Adrenal gland (tissue), 19 donors: ENCODE measurements at regions of chr3 and their contacts with region 1.

Region 1: GRCh38 chr3:113495035-113495434 is 19.9 kb downstream of the SPICE1 start:
- DNase-seq: peak; percentile 26 to 68 (median 40)
- H3K4me3 ChIP-seq: no peak overlapping the region
- H3K27ac ChIP-seq: no peak overlapping the region
- H3K4me1 ChIP-seq: no peaks in the 10 kb centered on the region
- H3K27me3 ChIP-seq: no peaks in the 10 kb centered on the region
- CTCF ChIP-seq: peak; percentile 30 to 54 (median 50)
- POLR2A ChIP-seq: no peak

Region 2: GRCh38 chr3:113575206-113575605 is 80.2 kb after region 1 on chr3:
- intact Hi-C with region 1: loop called in 1 of 2 experiments (anchors 5 kb)
- DNase-seq: peak in 4 of 7 donors; percentile 13 to 30 (median 27)
- H3K4me3 ChIP-seq: no peak overlapping the region
- H3K27ac ChIP-seq: no peak overlapping the region
- H3K4me1 ChIP-seq: no peaks in the 10 kb centered on the region
- H3K27me3 ChIP-seq: no peaks in the 10 kb centered on the region
- CTCF ChIP-seq: no peak
- POLR2A ChIP-seq: no peak

Region 3: DNA sequence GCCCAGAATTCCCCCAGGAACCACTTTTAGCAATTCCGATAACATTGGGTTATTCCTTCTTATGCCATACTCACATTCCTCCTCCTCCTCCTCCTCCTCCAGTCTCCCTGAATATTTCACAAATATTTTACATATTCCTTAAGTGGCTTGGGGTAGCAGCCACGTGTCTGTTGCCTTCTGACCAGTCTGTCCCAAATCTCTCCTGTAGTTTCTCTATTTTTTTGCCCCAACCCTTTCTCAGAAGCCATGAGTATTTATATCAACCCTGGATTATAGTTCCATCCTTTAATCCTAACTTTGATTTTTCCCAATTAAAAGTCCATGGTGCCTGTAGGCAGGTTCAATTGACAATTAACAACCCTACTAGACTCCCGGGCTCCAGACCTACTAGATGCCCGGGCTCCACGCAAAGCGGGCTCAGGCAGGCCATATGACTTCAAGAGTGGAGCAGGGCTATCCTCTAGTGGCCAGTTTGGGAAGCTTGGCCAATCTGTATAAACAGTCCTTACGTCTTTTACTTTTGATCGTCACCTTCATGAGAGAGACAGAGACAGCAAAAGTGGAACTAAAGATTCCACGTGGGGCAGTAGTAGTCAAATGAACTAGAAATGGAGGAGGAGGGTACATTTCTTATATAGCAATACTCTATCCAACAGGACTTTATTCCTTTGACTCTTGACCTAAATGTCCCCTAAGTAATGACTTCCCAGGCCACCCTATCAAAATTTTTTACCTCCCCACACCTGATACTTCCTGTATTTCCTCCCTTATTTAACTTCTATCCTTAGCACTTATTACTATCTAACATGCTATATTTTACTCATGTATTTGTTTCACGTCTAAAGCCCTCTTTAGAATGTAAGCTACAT is 131.7 kb after region 1 on chr3:
- intact Hi-C with region 1: loop called (anchors 5 kb)
- DNase-seq: peak; percentile 38 to 81 (median 56)
- H3K4me3 ChIP-seq: peak overlapping the region in 1 of 4 donors; percentile 23
- H3K27ac ChIP-seq: no peak overlapping the region
- H3K4me1 ChIP-seq: peaks cover 0 to 3% of the 10 kb centered on the region in 2 donors
- H3K27me3 ChIP-seq: no peaks in the 10 kb centered on the region
- CTCF ChIP-seq: peak; percentile 76 to 93 (median 85)
- POLR2A ChIP-seq: no peak